HEK293 (cell line): ENCODE measurements at regions of chr10 and their contacts with region 1.

Region 1: GRCh38 chr10:97434055-97434454 is 8.1 kb downstream of the PGAM1 start:
- H3K4me3 ChIP-seq: no peak overlapping the region
- H3K27ac ChIP-seq: no peak overlapping the region
- H3K4me1 ChIP-seq: no peaks in the 10 kb centered on the region
- CTCF ChIP-seq: no peak

Region 2: DNA sequence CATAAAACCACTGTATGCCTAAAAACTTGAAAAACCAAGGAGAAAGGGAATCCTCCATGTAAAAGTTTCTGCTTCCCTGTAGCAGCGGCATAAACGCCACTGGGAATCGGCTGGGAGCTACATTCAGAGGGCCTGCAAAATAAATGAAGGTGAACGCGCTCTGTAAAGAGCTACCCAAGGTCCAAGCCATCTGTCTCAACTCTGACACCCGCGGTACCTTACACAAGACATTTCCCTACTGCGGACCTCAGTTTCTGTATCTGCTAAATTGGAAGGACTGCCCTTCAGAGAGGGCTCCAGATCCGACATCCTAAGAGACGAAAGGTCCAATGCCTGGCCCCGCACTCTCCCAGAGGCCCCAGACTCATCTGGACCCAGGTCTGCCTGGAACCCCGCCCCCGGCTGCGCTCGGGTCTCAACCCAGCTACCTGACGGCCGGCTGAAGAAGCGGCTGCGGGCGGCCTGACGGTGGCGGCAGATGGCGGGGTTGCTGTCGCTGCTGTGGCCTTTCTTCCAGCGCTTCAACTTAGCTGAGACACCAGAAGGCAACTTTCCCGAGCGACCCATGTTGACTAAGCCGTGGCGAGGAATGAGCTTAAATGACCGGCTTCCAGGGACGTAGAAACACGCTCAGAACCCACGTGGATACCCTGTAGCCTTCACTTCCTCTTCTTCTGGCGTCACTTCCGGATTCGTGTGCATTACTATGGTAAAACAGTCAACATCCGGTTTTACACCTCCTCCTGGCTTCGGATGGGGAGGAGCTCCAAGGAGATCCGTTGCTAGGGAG is 33.2 kb before region 1 on chr10 and contains the start of gene RRP12:
- CTCF ChIA-PET with region 1: interaction called, 4 read pairs
- POLR2A ChIA-PET with region 1: interaction called, 10 read pairs
- H3K4me3 ChIP-seq: peak within 1 kb of the TSS; percentile 79
- H3K27ac ChIP-seq: peak within 1 kb of the TSS; percentile 52
- H3K4me1 ChIP-seq: 0 out of 2 replicates have a peak, but pooled peaks cover 4% of the 10 kb centered on the region
- CTCF ChIP-seq: peak; percentile 58; the same call in 1 of the 2 replicates

Region 3: DNA sequence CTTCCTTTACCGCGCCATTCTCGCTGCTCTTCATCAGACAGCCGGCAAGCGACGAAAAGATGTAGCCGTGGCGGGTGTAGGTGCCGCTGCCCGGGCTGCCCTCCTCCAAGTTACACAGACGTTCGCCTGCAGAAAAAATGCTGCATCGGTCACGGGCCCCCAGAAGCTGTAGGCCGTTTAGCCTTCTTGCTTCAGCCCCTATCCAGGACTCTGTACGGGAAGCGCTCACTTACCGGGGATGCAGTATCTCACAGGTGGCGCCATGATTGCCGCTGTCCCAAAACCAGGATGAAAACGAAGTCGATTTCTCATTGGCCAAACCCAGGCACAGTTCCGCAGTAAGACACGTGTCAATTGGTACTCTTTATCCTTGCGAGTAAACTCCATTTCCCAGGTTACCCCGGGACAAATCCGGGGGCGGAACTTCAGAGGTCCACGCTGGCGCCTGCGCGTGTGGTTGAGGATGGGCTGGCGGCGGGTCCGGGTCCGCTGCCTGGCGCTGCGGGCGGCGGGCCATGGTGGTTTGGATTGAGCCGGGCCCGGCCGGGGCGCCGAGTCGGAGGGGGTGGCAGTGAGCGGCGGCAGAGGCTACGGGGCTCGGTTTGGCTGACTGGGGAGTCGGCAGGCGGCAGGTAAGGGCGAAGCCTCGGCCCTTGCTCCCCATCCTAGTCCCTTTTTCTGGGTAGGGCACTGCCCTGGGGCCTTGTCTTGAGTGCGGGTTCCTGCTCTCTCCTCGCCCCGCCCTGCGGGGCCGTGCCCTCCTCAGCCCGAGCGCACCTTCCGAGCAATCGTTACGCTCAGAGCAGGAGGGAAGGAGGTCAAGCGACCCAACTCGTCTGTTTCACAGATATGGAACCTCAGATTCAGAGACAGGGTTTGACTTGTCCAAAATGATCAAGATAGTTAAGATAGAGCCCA is 11.9 kb after region 1 on chr10 and contains the starts of genes EXOSC1 and ZDHHC16:
- CTCF ChIA-PET with region 1: no interaction called
- POLR2A ChIA-PET with region 1: interaction called, 11 read pairs
- H3K4me3 ChIP-seq: peak within 1 kb of the TSS; percentile 88
- H3K27ac ChIP-seq: peak within 1 kb of the TSS; percentile 70
- H3K4me1 ChIP-seq: peaks cover 6% of the 10 kb centered on the region; the same call in 1 of the 2 replicates
- CTCF ChIP-seq: peak; percentile 49; the same call in 1 of the 2 replicates

Region 4: GRCh38 chr10:97498076-97498840 is 64.2 kb after region 1 on chr10 and contains the start of gene MMS19:
- CTCF ChIA-PET with region 1: no interaction called
- POLR2A ChIA-PET with region 1: no interaction called
- H3K4me3 ChIP-seq: peak within 1 kb of the TSS; percentile 88
- H3K27ac ChIP-seq: peak within 1 kb of the TSS; percentile 89
- H3K4me1 ChIP-seq: peaks cover 16% of the 10 kb centered on the region
- CTCF ChIP-seq: peak; percentile 22; the same call in 1 of the 2 replicates